ENCODE measurements at regions of chr17 and their contacts with region 1.

Region 1: GRCh38 chr17:5619088-5619740 is 34.9 kb upstream of the NLRP1 start:
- DNase-seq: peak; percentile 66 to 83 (median 74)
- ATAC-seq: peak; percentile 83
- H3K4me3 ChIP-seq: peak overlapping the region; percentile 60
- H3K27ac ChIP-seq: peak overlapping the region; percentile 87
- H3K4me1 ChIP-seq: peaks cover 3 to 10% of the 10 kb centered on the region in 2 experiments; a peak in 3 of 5 replicates
- H3K27me3 ChIP-seq: no peaks in the 10 kb centered on the region
- CTCF ChIP-seq: no peak
- EP300 ChIP-seq: no peak
- POLR2A ChIP-seq: peak; percentile 99
- RAD21 ChIP-seq: no peak

Region 2: DNA sequence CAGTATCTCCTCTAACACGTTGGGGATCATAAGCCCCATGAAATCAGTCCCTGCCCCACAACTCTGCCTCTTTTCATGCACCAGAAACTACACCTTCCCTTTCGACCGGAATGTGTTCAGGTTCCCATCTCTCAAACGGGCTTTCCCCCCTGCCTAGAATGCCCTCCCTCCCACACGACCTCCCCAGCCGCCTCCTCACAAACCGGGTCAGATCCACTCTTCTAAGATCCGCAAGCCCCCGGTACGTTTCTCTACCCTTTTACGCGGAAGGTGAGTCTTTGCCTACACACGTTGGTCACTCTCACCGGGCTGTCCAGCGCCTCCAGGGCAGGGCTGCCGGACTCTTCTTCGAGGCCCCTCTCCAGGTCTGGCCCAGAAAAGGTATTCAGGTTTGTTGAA is 151.1 kb before region 1 on chr17:
- CTCF ChIA-PET with region 1: no interaction called
- POLR2A ChIA-PET with region 1: no interaction called
- in situ Hi-C with region 1: no loop called
- intact Hi-C with region 1: no loop called
- DNase-seq: peak in 3 of 4 experiments; percentile 11 to 19 (median 11)
- ATAC-seq: peak; percentile 56
- H3K4me3 ChIP-seq: peak overlapping the region; percentile 97
- H3K27ac ChIP-seq: peak overlapping the region; percentile 70
- H3K4me1 ChIP-seq: peaks cover 4 to 6% of the 10 kb centered on the region in 2 experiments; a peak in 4 of 5 replicates
- H3K27me3 ChIP-seq: no peaks in the 10 kb centered on the region
- CTCF ChIP-seq: no peak
- EP300 ChIP-seq: no peak
- POLR2A ChIP-seq: no peak
- RAD21 ChIP-seq: no peak

Region 3: GRCh38 chr17:5605452-5605851 is 13.8 kb before region 1 on chr17:
- CTCF ChIA-PET with region 1: no interaction called
- POLR2A ChIA-PET with region 1: interaction called, 23 read pairs
- in situ Hi-C with region 1: no loop called
- intact Hi-C with region 1: no loop called
- DNase-seq: no peak
- ATAC-seq: no peak
- H3K4me3 ChIP-seq: no peak overlapping the region
- H3K27ac ChIP-seq: no peak overlapping the region
- H3K4me1 ChIP-seq: no peaks in the 10 kb centered on the region
- H3K27me3 ChIP-seq: no peaks in the 10 kb centered on the region
- CTCF ChIP-seq: no peak
- EP300 ChIP-seq: no peak
- POLR2A ChIP-seq: no peak
- RAD21 ChIP-seq: no peak

Region 4: GRCh38 chr17:5630434-5630833 is 11.2 kb after region 1 on chr17:
- CTCF ChIA-PET with region 1: no interaction called
- POLR2A ChIA-PET with region 1: interaction called, 33 read pairs
- in situ Hi-C with region 1: no loop called
- intact Hi-C with region 1: no loop called
- DNase-seq: no peak
- ATAC-seq: no peak
- H3K4me3 ChIP-seq: no peak overlapping the region
- H3K27ac ChIP-seq: no peak overlapping the region
- H3K4me1 ChIP-seq: no peaks in the 10 kb centered on the region
- H3K27me3 ChIP-seq: peaks cover 4 to 41% of the 10 kb centered on the region in 2 experiments; a peak in 4 of 5 replicates
- CTCF ChIP-seq: no peak
- EP300 ChIP-seq: no peak
- POLR2A ChIP-seq: no peak
- RAD21 ChIP-seq: no peak

Measured in K562 (cell line).